Heart right ventricle (tissue), 16 donors: ENCODE measurements at regions of chr17 and their contacts with region 1.

Region 1: GRCh38 chr17:50865984-50866774 is at the start of gene TOB1:
- DNase-seq: peak; percentile 98 to 99
- ATAC-seq: peak; percentile 89 to 95 (median 90)
- H3K4me3 ChIP-seq: peak within 1 kb of the TSS; percentile 69 to 97 (median 88)
- H3K27ac ChIP-seq: peak within 1 kb of the TSS; percentile 98 to 100 (median 100)
- H3K4me1 ChIP-seq: peaks cover 0 to 57% (median 42%) of the 10 kb centered on the region in 9 donors
- H3K27me3 ChIP-seq: no peaks in the 10 kb centered on the region
- CTCF ChIP-seq: peak in 1 of 9 donors; percentile 2
- total RNA-seq, gene TOB1: 54.7 to 134 (median 106) TPM

Region 2: GRCh38 chr17:50919321-50920085 is 53.3 kb after region 1 on chr17:
- intact Hi-C with region 1: loop called in 3 of 10 experiments (anchors 5 kb)
- DNase-seq: peak; percentile 88 to 93
- ATAC-seq: peak; percentile 82 to 94 (median 92)
- H3K4me3 ChIP-seq: no peak overlapping the region
- H3K27ac ChIP-seq: peak overlapping the region; percentile 70 to 89 (median 80)
- H3K4me1 ChIP-seq: peaks cover 31 to 77% (median 54%) of the 10 kb centered on the region in 9 donors
- H3K27me3 ChIP-seq: no peaks in the 10 kb centered on the region
- CTCF ChIP-seq: no peak

Region 3: DNA sequence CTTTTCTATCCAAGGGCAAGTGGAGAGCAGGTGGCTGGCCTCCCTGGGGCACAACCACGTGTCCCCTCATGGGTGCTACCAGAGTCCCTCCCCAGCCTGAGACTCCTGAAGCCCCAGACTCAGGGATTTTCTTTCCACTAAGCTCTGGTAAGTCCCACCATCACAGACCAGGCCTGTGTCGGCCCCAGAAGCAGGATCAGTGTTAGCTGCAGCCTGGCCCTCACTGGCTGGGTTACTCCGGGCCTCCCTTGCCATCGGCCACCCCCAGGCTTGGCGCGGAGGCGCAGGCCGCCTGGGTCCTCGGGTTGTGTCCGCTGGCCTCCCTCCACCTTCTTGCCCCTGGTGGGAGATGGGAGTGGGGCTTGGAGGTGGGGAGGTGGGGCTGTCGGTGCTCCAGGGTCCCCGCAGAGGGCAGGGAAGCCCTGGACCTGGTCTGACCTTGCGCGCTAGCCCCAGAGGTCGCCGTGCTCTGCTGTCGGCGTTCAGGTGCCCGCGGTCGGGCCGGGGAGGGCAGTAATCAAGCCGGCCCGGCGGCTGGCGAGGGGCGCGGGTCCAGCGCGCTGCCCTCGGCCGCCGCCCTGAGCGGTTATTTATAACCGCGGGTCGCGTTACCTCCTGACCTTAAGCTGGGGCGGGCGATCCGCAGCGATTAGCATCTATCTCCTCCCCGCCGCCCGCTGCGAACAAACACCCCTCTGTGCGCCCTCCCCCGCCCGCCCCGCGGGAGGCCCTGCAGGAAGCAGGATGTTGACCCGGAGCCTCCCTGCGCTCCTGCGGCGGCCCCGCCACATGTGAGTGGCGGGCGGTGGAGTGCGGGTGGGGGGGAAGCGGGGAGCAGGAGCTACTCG is 78.1 kb after region 1 on chr17:
- intact Hi-C with region 1: loop called in 6 of 10 experiments (anchors 1 to 5 kb)
- DNase-seq: peak; percentile 88 to 89
- ATAC-seq: peak; percentile 82 to 93 (median 86)
- H3K4me3 ChIP-seq: peak overlapping the region; percentile 47 to 69 (median 61)
- H3K27ac ChIP-seq: peak overlapping the region; percentile 92 to 99 (median 98)
- H3K4me1 ChIP-seq: peaks cover 11 to 65% (median 37%) of the 10 kb centered on the region in 9 donors
- H3K27me3 ChIP-seq: no peaks in the 10 kb centered on the region
- CTCF ChIP-seq: peak in 3 of 9 donors; percentile 5 to 9 (median 9)

Region 4: DNA sequence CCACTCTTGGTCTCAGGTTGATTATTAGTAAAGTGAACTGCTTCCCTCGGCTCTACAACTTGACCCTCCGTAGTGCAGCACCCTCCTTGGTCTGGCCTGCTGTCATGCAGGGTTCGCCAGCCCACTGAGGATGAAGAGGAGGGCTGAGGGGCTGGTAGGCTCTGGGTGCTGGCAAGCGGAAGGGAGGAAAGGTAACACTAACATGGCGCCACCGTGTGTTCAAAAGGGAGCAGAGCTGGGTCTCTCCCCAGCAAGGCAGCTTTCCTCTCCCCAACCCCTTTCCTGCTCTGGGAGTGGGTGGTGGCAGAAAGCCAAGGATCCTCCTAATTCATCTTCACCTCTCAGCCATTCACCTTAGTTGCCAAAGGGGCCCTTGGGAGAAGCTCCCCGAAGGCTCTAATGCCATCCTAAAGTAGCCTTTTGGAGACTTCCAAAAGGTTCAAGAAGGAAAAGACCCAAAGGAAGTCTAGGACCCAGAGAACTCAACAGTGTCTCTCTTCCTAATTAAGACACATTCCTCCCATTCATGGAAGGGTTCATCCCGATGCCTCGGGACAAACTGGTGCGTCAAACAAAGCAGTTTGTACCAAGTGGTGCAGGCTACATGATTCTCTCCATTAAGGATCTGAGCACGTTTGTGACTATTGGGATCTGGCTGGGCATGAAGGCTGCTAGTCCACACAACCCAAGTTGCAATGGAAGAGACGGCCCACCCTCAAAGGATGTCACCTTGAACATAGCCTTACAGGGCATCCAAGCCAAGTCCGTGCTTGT is 90.8 kb after region 1 on chr17:
- intact Hi-C with region 1: loop called in 1 of 10 experiments (anchors 2 kb)
- DNase-seq: peak; percentile 66 to 67
- ATAC-seq: peak; percentile 56 to 73 (median 68)
- H3K4me3 ChIP-seq: no peak overlapping the region
- H3K27ac ChIP-seq: peak overlapping the region in 6 of 10 donors; percentile 9 to 86 (median 76)
- H3K4me1 ChIP-seq: peaks cover 3 to 41% (median 31%) of the 10 kb centered on the region in 9 donors
- H3K27me3 ChIP-seq: no peaks in the 10 kb centered on the region
- CTCF ChIP-seq: peak; percentile 44 to 80 (median 77)